PC-9 (cell line): ENCODE measurements at regions of chr6 and their contacts with region 1.

Region 1: GRCh38 chr6:150813319-150813992 is 52.0 kb upstream of the MTHFD1L start:
- DNase-seq: peak; percentile 43 to 81
- H3K4me3 ChIP-seq: no peak overlapping the region; the same call in 1 of the 2 replicates
- H3K27ac ChIP-seq: peak overlapping the region; percentile 100
- H3K4me1 ChIP-seq: peaks cover 35% of the 10 kb centered on the region
- H3K27me3 ChIP-seq: no peaks in the 10 kb centered on the region
- CTCF ChIP-seq: no peak

Region 2: DNA sequence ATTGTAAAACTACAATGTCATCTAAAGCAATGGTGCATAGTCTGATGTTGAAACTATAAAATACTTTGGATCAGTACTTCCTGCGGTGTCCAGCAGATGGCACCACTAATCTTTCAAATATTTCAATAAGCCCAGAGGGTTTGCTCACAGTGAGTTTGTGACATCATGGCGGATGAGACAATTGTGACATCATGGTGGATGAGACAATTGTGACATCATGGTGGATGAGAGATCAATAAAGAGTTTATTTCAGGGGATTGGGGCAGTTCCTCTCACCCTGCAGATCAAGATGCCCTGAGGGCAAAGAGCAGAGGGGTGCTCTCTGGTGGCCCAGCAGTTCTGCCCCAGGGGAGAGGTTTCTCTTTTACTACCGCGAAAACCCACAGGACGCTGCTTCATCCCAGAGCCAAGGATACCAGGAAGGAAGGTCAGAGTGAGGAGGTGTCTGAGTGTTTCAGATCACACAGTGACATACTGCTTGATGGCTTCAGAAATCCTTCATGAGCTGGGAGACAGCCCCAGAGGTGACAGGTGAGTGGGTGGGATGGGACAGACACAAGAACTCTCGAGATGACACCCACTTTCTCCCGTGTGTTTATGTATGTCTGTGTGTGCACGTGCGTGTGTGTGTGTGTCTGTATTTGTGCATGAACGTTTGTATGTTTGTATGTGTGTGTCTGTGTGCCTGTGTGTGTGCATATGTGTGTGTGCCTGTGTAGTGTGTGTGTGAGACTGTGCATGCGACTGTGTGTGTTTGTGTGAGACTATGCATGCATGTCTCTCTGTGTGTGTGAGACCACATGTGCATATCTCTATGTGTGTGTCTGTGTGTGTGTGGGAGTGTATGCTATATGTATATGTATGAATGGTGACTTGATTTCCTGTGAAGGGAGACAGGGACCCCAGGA is 879.0 kb before region 1 on chr6:
- CTCF ChIA-PET with region 1: no interaction called
- POLR2A ChIA-PET with region 1: no interaction called
- intact Hi-C with region 1: loop called (anchors 2 kb)
- DNase-seq: peak; percentile 29 to 50
- H3K4me3 ChIP-seq: no peak overlapping the region
- H3K27ac ChIP-seq: no peak overlapping the region
- H3K4me1 ChIP-seq: peaks cover 24% of the 10 kb centered on the region
- H3K27me3 ChIP-seq: no peaks in the 10 kb centered on the region
- CTCF ChIP-seq: peak; percentile 92

Region 3: DNA sequence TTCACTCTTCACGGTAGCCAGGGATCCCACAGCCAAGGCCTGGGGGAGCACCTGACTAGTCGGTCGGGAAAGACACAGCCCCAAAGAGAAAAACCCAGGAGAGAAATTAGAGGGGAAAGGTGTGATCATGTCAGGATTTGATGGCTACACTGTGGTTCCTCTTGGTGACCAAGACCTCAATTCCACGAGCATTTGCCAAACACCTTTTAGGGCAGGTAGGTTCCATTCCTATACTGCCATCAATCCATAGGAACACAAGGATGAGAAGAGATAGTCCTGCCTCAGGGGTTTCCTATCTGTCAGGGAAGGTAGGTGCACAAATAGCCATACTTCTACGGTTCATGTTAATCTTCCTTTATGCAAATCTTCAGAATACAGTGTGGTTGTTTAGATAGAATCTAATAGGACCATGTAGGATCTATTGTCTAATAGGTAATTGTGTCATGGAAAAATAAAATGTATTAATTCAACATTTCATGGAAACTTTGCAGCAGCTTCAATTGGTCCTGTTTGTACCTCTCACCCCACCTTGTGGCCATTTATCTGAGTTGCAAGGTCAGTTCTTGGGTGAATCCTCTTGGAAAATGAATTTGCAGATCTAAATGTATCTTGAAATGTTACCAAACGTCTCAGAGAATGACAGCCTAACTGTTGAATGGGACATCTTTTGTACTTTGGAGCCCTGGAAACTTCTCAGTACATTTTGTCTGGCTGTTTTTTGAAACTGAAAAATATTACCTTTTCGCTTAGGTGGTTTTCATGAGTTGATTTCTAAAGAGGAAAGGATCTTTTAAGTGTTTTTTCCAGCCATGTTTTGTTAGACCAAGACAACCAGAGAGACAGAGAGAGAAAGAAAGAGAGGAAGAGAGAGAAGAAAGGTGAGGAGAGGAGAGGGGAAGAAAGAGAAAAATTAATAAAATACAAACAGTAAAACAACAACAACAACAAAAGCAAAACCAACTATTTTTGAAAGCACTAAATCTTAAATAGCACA is 478.4 kb before region 1 on chr6:
- CTCF ChIA-PET with region 1: no interaction called
- POLR2A ChIA-PET with region 1: no interaction called
- intact Hi-C with region 1: loop called (anchors 5 kb)
- DNase-seq: peak; percentile 20 to 38
- H3K4me3 ChIP-seq: no peak overlapping the region
- H3K27ac ChIP-seq: no peak overlapping the region
- H3K4me1 ChIP-seq: peaks cover 13% of the 10 kb centered on the region
- H3K27me3 ChIP-seq: no peaks in the 10 kb centered on the region
- CTCF ChIP-seq: peak; percentile 92

Region 4: DNA sequence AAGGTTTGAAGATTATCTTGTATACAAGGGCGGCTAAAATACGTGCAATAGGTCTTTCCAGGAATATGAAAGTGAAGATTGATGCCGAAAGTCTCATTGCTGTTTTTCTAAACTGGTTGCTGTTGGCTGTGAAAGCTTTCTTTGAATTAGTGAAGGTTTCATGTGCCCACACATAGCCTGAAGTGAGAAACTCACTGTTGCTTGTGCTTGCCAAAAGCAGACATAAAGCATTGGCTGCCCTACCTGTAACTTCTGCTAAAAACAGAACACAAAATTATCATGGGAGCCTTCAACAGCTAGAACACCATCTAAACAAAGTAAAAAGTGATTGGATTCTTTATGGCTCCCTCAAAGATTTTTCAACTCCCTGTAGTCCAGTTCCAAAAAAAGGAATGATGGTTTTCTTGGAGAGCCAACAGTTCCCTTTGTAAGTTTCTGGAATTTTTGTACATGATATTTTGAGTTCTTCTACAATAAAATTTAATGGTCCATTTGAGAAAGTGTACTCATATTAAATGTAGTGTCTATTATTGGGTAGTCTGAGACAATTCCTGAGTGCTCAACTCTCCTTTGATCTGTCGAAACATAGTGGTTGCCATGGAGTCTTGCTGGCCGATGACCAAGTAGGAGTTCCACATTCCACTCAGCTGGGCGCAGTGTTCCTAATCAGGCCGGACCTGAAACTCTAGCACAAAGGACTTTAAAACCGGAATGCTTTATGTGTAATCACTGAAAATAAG is 145.3 kb before region 1 on chr6:
- CTCF ChIA-PET with region 1: no interaction called
- POLR2A ChIA-PET with region 1: interaction called, 4 read pairs
- intact Hi-C with region 1: loop called (anchors 1 kb)
- DNase-seq: peak; percentile 88 to 90
- H3K4me3 ChIP-seq: peak overlapping the region; percentile 26; the same call in 1 of the 2 replicates
- H3K27ac ChIP-seq: peak overlapping the region; percentile 88
- H3K4me1 ChIP-seq: peaks cover 28% of the 10 kb centered on the region
- H3K27me3 ChIP-seq: no peaks in the 10 kb centered on the region
- CTCF ChIP-seq: no peak; the same call in 1 of the 2 replicates

Region 5: DNA sequence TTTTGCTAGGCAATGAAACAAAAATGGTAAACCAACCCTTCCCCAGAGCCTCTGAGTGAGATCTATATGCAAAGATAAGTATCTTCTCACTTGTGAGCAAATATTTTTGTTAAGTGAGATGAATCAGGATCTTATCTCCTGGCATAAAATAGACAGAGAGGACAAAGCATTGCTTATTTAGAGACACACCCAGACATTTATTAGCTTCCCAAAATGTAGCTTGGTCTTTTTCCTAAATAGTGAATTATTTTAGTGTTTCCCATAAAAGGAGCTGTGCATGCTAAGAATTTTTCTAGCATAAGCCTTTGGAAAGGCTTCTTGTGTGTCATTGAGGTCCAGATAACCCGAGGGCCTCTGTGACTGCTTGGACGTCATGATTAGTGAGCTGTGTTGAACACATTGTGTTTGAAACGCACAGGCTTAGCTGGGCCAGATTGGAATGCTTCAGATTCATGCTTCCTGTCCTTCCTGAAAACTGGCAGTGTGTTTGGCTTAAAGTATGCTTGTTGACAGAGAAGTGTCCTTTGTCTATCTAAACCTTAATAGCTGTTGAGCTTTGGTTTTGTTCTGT is 68.5 kb after region 1 on chr6:
- CTCF ChIA-PET with region 1: interaction called, 8 read pairs
- POLR2A ChIA-PET with region 1: interaction called, 4 read pairs
- intact Hi-C with region 1: loop called (anchors 5 kb)
- DNase-seq: peak; percentile 41 to 79
- H3K4me3 ChIP-seq: no peak overlapping the region
- H3K27ac ChIP-seq: peak overlapping the region; percentile 47
- H3K4me1 ChIP-seq: peaks cover 18% of the 10 kb centered on the region
- H3K27me3 ChIP-seq: no peaks in the 10 kb centered on the region
- CTCF ChIP-seq: no peak

Region 6: GRCh38 chr6:151339369-151339768 is 525.9 kb after region 1 on chr6:
- CTCF ChIA-PET with region 1: interaction called, 6 read pairs
- POLR2A ChIA-PET with region 1: no interaction called
- intact Hi-C with region 1: loop called (anchors 5 kb)
- DNase-seq: no peak
- H3K4me3 ChIP-seq: no peak overlapping the region
- H3K27ac ChIP-seq: no peak overlapping the region
- H3K4me1 ChIP-seq: no peaks in the 10 kb centered on the region
- H3K27me3 ChIP-seq: no peaks in the 10 kb centered on the region
- CTCF ChIP-seq: no peak